Activated B cell treated with CpG ODN at 0.5 μM for 24 hours (primary cell): ENCODE measurements at regions of chr9 and their contacts with region 1.

Region 1: GRCh38 chr9:134175808-134176598 is 11.6 kb upstream of the RNU6ATAC start:
- DNase-seq: no peak
- ATAC-seq: no peak
- H3K4me3 Mint-ChIP-seq: no peak overlapping the region
- H3K27ac Mint-ChIP-seq: no peak overlapping the region
- H3K4me1 Mint-ChIP-seq: peaks cover 17% of the 10 kb centered on the region
- H3K27me3 Mint-ChIP-seq: peaks cover 29% of the 10 kb centered on the region
- CTCF ChIP-seq: no peak

Region 2: GRCh38 chr9:134689321-134690181 is 513.5 kb after region 1 on chr9:
- CTCF ChIA-PET with region 1: interaction called, 3 read pairs
- POLR2A ChIA-PET with region 1: no interaction called
- intact Hi-C with region 1: loop called (anchors 5 kb)
- DNase-seq: no peak
- ATAC-seq: no peak
- H3K4me3 Mint-ChIP-seq: no peak overlapping the region
- H3K27ac Mint-ChIP-seq: no peak overlapping the region
- H3K4me1 Mint-ChIP-seq: peaks cover 2% of the 10 kb centered on the region
- H3K27me3 Mint-ChIP-seq: peaks cover 2% of the 10 kb centered on the region
- CTCF ChIP-seq: no peak

Region 3: GRCh38 chr9:135343837-135344522 is 1168.0 kb after region 1 on chr9:
- CTCF ChIA-PET with region 1: no interaction called
- POLR2A ChIA-PET with region 1: no interaction called
- intact Hi-C with region 1: loop called (anchors 5 kb)
- DNase-seq: peak; percentile 34
- ATAC-seq: peak; percentile 28
- H3K4me3 Mint-ChIP-seq: no peak overlapping the region
- H3K27ac Mint-ChIP-seq: no peak overlapping the region
- H3K4me1 Mint-ChIP-seq: no peaks in the 10 kb centered on the region
- H3K27me3 Mint-ChIP-seq: peaks cover 8% of the 10 kb centered on the region
- CTCF ChIP-seq: no peak